ENCODE measurements at regions of chr2 and their contacts with region 1.

Region 1: DNA sequence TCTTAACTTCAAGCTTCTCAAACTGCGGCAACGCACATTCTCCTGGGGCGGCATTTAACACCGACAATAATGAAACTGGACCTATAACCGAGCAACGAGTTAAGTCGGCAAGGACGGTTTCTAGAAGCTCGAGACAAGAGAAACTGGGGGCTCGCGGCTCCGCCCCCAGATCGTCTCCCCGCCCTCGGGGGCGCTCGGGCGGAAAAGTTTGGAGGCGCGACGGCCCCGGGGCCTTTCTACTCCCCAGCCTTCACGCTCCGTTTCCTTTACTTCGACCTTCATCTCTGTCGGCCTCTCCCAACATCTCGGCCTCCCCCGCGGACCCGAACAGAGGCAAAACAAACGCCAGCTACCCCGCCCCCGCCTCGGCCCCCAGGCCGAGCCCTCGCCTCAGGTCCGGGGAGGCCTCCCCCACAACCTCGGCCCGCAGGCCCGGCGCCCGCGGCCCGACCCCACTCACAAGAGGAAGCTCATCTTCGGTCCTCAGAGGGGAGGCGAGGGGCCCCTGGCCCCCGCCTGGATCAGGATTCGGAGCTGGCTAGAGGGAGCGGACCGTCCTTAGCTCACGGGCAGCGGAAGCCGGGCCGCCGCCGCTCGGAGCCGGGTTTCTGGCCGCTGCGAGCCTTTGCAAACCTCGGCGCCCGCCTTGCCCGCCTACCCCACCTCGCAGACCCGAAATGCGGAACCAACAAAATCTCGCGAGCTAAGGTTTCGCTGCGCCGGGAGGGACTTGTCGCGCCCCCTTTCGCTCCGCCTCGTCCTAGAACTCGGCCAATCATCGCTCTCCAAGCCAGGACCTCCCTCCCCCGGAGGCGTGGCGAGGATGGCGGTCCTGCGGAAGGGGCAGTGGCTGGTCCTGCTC is at the start of gene MOB1A:
- DNase-seq: peak; percentile 99
- ATAC-seq: peak; percentile 95
- H3K4me3 Mint-ChIP-seq: peak within 1 kb of the TSS; percentile 82
- H3K27ac Mint-ChIP-seq: peak within 1 kb of the TSS; percentile 87
- H3K4me1 Mint-ChIP-seq: peaks cover 42% of the 10 kb centered on the region
- H3K27me3 Mint-ChIP-seq: no peaks in the 10 kb centered on the region
- total RNA-seq, gene MOB1A: 96.6 to 149 TPM

Region 2: DNA sequence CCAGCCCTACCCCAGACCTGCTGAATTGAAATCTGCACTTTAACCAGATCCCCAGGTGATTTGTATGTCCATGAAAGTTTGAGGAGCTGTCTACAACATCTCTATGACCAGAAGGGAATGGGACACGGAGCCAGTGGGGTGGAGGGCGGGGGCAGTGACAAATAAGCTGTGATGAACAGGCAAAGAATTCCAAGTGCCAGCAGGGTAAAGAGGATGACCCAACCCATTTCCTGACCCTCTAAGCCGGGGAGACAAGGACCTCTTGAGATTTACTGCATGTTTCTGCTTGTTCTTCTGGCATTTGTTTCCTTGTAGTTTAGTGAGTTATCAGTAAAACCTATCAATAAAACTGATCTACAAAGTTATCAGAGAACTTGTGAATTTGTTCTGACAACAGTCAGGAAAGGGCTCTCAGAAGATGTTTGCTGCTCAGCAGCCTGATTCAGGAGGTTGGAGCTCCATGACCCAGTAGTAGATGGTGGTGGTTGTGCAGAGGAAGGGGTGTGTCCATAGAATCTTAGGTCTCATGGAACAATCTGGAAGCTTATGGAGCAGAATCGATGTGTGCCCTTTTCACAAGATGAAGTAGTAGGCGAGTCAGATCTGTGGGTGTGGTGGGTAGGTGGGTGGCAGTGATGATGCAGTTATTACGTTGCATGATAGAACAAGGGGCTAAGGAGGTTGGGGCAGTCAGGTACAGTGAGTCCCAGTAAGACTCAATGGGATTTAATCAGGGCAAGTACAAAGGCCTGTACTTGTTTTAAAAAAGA is 184.9 kb before region 1 on chr2:
- CTCF ChIA-PET with region 1: no interaction called
- POLR2A ChIA-PET with region 1: no interaction called
- intact Hi-C with region 1: no loop called
- DNase-seq: peak; percentile 45
- ATAC-seq: peak; percentile 30
- H3K4me3 Mint-ChIP-seq: no peak overlapping the region
- H3K27ac Mint-ChIP-seq: peak overlapping the region; percentile 53
- H3K4me1 Mint-ChIP-seq: peaks cover 78% of the 10 kb centered on the region
- H3K27me3 Mint-ChIP-seq: no peaks in the 10 kb centered on the region

Region 3: DNA sequence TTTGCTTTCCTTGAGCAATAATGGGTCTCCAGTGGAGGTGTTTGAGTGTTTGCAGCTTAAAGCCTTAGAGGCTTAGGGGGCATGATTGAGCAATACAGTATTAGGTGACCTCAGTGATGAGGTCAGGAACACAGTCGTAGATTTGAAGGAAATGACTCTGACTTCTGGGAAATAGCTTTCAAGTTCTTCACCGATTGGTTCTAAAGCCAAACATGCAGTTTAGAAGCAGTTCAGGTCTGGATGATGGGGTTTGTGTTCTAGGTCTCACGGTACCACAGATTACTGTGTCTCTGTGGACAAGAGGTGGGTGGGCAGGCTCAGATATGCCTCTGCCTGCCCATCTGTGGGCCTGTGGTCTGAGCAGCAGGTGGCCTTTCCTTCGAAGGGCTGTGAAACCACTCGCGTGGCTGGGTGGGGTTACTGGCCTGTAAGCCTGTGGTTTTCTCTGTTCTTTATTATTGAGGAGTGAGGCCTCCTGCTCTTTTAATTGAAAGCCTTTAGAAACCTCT is 27.8 kb after region 1 on chr2:
- CTCF ChIA-PET with region 1: interaction called, 19 read pairs
- POLR2A ChIA-PET with region 1: interaction called, 5 read pairs
- intact Hi-C with region 1: loop called in 1 of 2 experiments (anchors 5 kb)
- DNase-seq: peak; percentile 63
- ATAC-seq: peak; percentile 82
- H3K4me3 Mint-ChIP-seq: peak overlapping the region; percentile 61
- H3K27ac Mint-ChIP-seq: peak overlapping the region; percentile 94
- H3K4me1 Mint-ChIP-seq: peaks cover 66% of the 10 kb centered on the region
- H3K27me3 Mint-ChIP-seq: no peaks in the 10 kb centered on the region

Region 4: GRCh38 chr2:74472086-74472944 is 293.9 kb after region 1 on chr2 and contains the start of gene MRPL53:
- CTCF ChIA-PET with region 1: no interaction called
- POLR2A ChIA-PET with region 1: no interaction called
- intact Hi-C with region 1: no loop called
- DNase-seq: peak; percentile 97
- ATAC-seq: peak; percentile 92
- H3K4me3 Mint-ChIP-seq: peak within 1 kb of the TSS; percentile 98
- H3K27ac Mint-ChIP-seq: peak within 1 kb of the TSS; percentile 93
- H3K4me1 Mint-ChIP-seq: peaks cover 21% of the 10 kb centered on the region
- H3K27me3 Mint-ChIP-seq: no peaks in the 10 kb centered on the region
- total RNA-seq, gene MRPL53: 87.4 to 88.5 TPM